CD4-positive, alpha-beta memory T cell (primary cell): ENCODE measurements at regions of chr15 and their contacts with region 1.

Region 1: GRCh38 chr15:98779463-98780071 is 131.2 kb downstream of the IGF1R start:
- DNase-seq: peak; percentile 53 to 65 (median 58)
- H3K4me3 ChIP-seq: no peak overlapping the region
- H3K4me3 Mint-ChIP-seq: peak overlapping the region in 6 of 8 donors; percentile 2 to 73 (median 42)
- H3K27ac ChIP-seq: no peak overlapping the region
- H3K27ac Mint-ChIP-seq: peak overlapping the region in 4 of 7 donors; percentile 15 to 88 (median 38)
- H3K4me1 ChIP-seq: peaks cover 14% of the 10 kb centered on the region
- H3K4me1 Mint-ChIP-seq: peaks cover 11 to 25% (median 18%) of the 10 kb centered on the region in 4 donors
- H3K27me3 ChIP-seq: no peaks in the 10 kb centered on the region
- H3K27me3 Mint-ChIP-seq: peaks cover 3 to 4% of the 10 kb centered on the region in 2 donors

Region 2: GRCh38 chr15:98518823-98519561 is 260.6 kb before region 1 on chr15:
- CTCF ChIA-PET with region 1: interaction called, 6 read pairs
- POLR2A ChIA-PET with region 1: no interaction called
- intact Hi-C with region 1: loop called (anchors 2 kb)
- DNase-seq: peak in 4 of 5 donors; percentile 38 to 50 (median 42)
- H3K4me3 ChIP-seq: no peak overlapping the region
- H3K4me3 Mint-ChIP-seq: no peak overlapping the region
- H3K27ac ChIP-seq: no peak overlapping the region
- H3K27ac Mint-ChIP-seq: peak overlapping the region in 1 of 7 donors; percentile 23
- H3K4me1 ChIP-seq: no peaks in the 10 kb centered on the region
- H3K4me1 Mint-ChIP-seq: peaks cover 0 to 4% (median 0%) of the 10 kb centered on the region in 4 donors
- H3K27me3 ChIP-seq: no peaks in the 10 kb centered on the region
- H3K27me3 Mint-ChIP-seq: peaks cover 0 to 4% of the 10 kb centered on the region in 2 donors

Region 3: DNA sequence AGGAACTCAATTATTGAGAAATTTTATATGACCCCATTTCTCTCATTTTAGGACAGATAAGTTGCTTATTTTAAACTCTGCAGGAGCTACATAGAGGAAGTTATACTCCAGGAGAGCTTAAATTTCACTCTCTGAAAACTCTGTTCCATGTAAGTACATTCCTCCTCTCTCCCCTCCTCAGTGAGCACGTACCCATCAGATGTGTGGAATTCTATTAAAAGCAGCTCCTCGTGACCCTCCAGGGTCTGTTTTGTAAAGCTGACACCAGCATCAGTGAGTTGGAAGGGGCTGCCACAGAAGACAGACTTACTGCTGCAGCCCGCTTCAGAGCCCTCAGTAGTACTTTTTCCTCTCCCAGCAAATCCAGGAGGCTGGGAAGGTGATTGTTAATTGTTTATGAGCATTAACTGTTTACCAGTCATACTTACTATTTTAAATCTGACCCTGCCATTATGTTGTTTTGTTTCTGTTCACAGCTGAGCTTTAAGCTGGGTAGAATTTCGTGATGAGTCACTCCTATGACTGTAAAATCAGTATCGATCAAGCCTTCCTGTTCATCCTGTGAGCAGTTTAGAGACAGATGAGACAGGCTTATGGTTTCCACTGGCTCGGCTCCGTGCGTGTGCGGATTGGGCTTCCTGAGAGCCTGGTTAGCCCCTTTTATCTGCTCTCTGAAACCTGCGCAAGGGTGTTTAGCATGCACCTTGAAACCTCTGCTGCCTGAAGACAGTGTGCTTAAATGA is 110.8 kb before region 1 on chr15:
- CTCF ChIA-PET with region 1: no interaction called
- POLR2A ChIA-PET with region 1: no interaction called
- intact Hi-C with region 1: no loop called
- DNase-seq: no peak
- H3K4me3 ChIP-seq: no peak overlapping the region
- H3K4me3 Mint-ChIP-seq: peak overlapping the region in 5 of 8 donors; percentile 15 to 52 (median 27)
- H3K27ac ChIP-seq: no peak overlapping the region
- H3K27ac Mint-ChIP-seq: peak overlapping the region in 2 of 7 donors; percentile 28 to 32
- H3K4me1 ChIP-seq: peaks cover 13% of the 10 kb centered on the region
- H3K4me1 Mint-ChIP-seq: peaks cover 9 to 62% (median 28%) of the 10 kb centered on the region in 4 donors
- H3K27me3 ChIP-seq: no peaks in the 10 kb centered on the region
- H3K27me3 Mint-ChIP-seq: peaks cover 3 to 6% of the 10 kb centered on the region in 2 donors

Region 4: DNA sequence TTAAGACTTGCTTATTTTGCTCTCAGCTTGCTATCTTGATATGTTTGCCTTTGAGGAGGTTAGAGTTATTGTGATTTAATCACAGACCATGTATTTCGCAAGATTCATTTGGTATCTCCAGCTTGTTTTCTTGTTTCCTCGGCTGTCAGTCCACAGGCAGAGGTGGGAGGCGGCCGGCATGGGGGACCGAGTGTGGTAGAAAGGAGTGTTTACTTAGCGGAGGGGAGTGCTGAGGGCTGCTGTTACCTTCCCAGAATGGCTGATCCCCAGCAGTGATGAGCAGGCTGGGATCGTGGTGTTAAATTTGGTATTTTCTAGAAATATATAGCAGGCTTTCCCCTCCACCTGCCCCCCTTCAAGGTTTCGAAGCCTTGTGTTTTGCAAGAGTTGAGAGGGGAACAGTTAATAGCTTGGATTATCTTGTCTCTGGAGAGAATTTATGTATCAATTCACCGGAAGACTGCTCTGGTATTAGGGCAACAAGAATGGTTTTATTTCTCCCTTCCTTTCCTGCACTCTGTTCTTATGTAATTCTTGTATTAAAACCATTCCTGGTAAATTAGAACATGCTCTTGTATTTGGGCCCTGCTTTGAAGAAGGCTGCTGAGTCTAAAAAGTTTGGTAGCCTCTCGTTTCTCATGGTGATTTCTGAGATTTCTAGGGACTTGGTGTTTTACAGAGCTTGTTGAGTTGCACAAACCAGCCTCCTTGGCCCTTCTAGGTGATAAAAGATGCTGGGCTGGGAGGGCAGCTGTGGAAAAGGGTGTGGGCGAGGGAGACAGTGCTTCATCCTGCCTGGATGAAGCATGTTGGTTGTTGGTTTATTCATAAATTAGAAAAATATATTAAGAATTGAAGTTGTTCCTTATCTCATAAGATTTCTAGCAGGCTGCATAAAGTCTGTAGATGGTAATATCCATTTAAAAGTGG is 20.2 kb after region 1 on chr15:
- CTCF ChIA-PET with region 1: interaction called, 36 read pairs
- POLR2A ChIA-PET with region 1: interaction called, 3 read pairs
- intact Hi-C with region 1: no loop called
- DNase-seq: no peak
- H3K4me3 ChIP-seq: no peak overlapping the region
- H3K4me3 Mint-ChIP-seq: no peak overlapping the region
- H3K27ac ChIP-seq: no peak overlapping the region
- H3K27ac Mint-ChIP-seq: peak overlapping the region in 1 of 7 donors; percentile 57
- H3K4me1 ChIP-seq: no peaks in the 10 kb centered on the region
- H3K4me1 Mint-ChIP-seq: peaks cover 4 to 35% (median 22%) of the 10 kb centered on the region in 4 donors
- H3K27me3 ChIP-seq: peaks cover 3% of the 10 kb centered on the region
- H3K27me3 Mint-ChIP-seq: peaks cover 2 to 4% of the 10 kb centered on the region in 2 donors

Region 5: DNA sequence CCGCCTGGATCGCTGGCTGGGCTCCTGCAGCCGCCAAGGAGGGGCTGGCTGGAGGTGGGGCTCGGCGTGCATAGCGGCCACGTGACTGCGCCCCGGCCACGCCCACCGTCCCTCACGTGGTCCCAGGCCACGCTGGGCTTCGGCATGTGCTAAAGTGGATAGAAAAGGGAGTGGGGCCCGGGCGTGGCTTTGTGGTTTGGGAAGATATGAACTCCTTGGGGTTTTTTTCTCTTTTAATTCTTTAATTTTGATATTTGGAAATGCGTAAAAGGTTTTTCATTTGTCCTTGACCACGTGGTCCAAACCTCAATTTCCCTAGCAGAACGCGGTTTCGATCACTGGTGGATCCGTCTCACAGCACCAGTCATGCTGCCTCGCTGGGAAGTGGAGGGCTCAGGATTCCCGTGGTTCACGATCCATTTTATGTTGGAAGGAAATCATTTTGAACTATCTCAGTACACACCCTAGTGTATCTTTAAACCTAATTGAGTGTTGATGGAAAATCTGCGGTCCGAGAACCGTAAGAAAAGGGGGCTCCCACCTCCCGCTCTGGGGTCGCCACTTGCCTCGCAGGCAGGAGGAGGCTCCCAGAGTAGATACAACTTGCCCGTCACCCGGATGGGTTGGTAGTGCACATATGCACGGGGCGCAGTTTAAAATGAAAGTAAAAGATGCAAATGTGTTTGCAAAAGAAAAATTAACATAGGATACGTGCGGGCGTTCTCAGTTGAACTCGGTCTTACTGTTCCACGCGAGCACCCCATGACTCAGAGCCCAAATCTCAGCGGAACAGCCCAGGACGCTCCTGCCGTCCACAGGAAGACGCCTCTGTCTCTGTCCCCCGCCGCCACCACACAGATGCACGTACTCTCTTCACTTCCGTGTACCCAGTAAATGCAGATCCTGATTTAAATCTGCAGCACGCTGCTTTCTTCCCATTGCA is 86.1 kb after region 1 on chr15:
- CTCF ChIA-PET with region 1: interaction called, 12 read pairs
- POLR2A ChIA-PET with region 1: no interaction called
- intact Hi-C with region 1: no loop called
- DNase-seq: peak; percentile 59 to 84 (median 72)
- H3K4me3 ChIP-seq: peak overlapping the region; percentile 46 to 63
- H3K4me3 Mint-ChIP-seq: peak overlapping the region; percentile 90 to 96 (median 94)
- H3K27ac ChIP-seq: peak overlapping the region; percentile 61
- H3K27ac Mint-ChIP-seq: peak overlapping the region; percentile 84 to 97 (median 93)
- H3K4me1 ChIP-seq: peaks cover 6% of the 10 kb centered on the region
- H3K4me1 Mint-ChIP-seq: peaks cover 13 to 25% (median 19%) of the 10 kb centered on the region in 4 donors
- H3K27me3 ChIP-seq: no peaks in the 10 kb centered on the region
- H3K27me3 Mint-ChIP-seq: peaks cover 0 to 1% of the 10 kb centered on the region in 2 donors

Region 6: GRCh38 chr15:98904544-98904943 is 125.0 kb after region 1 on chr15:
- CTCF ChIA-PET with region 1: interaction called, 7 read pairs
- POLR2A ChIA-PET with region 1: no interaction called
- intact Hi-C with region 1: loop called (anchors 1 kb)
- DNase-seq: peak in 2 of 5 donors; percentile 2 to 5
- H3K4me3 ChIP-seq: no peak overlapping the region
- H3K4me3 Mint-ChIP-seq: no peak overlapping the region
- H3K27ac ChIP-seq: no peak overlapping the region
- H3K27ac Mint-ChIP-seq: no peak overlapping the region
- H3K4me1 ChIP-seq: no peaks in the 10 kb centered on the region
- H3K4me1 Mint-ChIP-seq: peaks cover 0 to 6% (median 5%) of the 10 kb centered on the region in 4 donors
- H3K27me3 ChIP-seq: no peaks in the 10 kb centered on the region
- H3K27me3 Mint-ChIP-seq: peaks cover 1 to 4% of the 10 kb centered on the region in 2 donors